CD4-positive, alpha-beta memory T cell (primary cell): ENCODE measurements at regions of chr17 and their contacts with region 1.

Region 1: GRCh38 chr17:7515911-7516610 is 31.9 kb downstream of the POLR2A start:
- DNase-seq: no peak
- H3K4me3 ChIP-seq: no peak overlapping the region
- H3K4me3 Mint-ChIP-seq: no peak overlapping the region
- H3K27ac ChIP-seq: no peak overlapping the region
- H3K27ac Mint-ChIP-seq: peak overlapping the region in 4 of 7 donors; percentile 17 to 74 (median 50)
- H3K4me1 ChIP-seq: no peaks in the 10 kb centered on the region
- H3K4me1 Mint-ChIP-seq: peaks cover 0 to 2% (median 0%) of the 10 kb centered on the region in 4 donors
- H3K27me3 ChIP-seq: no peaks in the 10 kb centered on the region
- H3K27me3 Mint-ChIP-seq: no peaks in the 10 kb centered on the region

Region 2: DNA sequence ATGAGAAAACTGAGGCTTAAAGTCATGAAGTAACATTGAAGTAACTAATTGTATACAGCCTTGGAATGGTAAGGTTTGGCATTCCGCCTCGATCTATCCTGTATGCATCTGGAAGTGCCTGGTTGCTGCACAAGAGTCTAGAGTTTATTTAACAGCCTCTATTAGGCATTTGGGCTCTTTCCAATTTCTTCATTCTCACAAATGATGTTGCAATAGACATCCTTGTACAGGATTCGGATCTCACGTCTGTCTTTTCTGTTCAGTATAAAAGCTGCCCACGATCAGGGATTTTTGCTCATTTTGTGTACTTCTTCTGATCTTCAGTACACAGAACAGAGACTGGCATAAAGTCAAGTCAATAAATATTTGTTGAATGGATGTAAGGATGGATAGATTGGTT is 1181.7 kb before region 1 on chr17:
- CTCF ChIA-PET with region 1: no interaction called
- POLR2A ChIA-PET with region 1: no interaction called
- intact Hi-C with region 1: no loop called
- DNase-seq: no peak
- H3K4me3 ChIP-seq: no peak overlapping the region
- H3K4me3 Mint-ChIP-seq: no peak overlapping the region
- H3K27ac ChIP-seq: no peak overlapping the region
- H3K27ac Mint-ChIP-seq: no peak overlapping the region
- H3K4me1 ChIP-seq: no peaks in the 10 kb centered on the region
- H3K4me1 Mint-ChIP-seq: no peaks in the 10 kb centered on the region
- H3K27me3 ChIP-seq: no peaks in the 10 kb centered on the region
- H3K27me3 Mint-ChIP-seq: peaks cover 5 to 18% of the 10 kb centered on the region in 2 donors

Region 3: DNA sequence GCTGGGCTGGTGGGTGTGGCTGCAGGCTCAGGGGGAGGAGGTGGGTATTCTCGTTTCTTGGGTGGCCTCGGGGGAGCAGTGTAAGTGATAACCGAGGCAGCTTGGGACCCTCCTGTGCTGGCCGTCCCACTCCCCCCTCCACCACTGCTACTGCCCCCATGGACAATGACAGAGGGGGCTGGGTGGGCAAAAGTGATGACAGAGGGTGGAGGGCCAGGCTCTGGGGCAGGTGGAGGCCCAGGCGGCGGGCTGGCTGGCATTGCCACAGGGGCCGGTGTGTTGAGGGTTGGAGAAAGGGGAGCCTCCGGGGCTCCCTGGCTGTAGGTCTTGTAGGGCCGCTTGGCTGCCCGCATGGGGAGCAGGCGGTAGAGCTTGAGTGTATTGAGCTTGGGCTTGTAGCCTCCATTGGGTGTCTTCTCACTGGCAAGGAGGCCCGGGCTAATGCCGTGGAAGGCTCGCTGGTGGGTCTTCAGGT is 52.7 kb before region 1 on chr17:
- CTCF ChIA-PET with region 1: no interaction called
- POLR2A ChIA-PET with region 1: no interaction called
- intact Hi-C with region 1: no loop called
- DNase-seq: no peak
- H3K4me3 ChIP-seq: no peak overlapping the region
- H3K4me3 Mint-ChIP-seq: peak overlapping the region in 1 of 8 donors; percentile 36
- H3K27ac ChIP-seq: no peak overlapping the region
- H3K27ac Mint-ChIP-seq: peak overlapping the region in 1 of 7 donors; percentile 41
- H3K4me1 ChIP-seq: peaks cover 3% of the 10 kb centered on the region
- H3K4me1 Mint-ChIP-seq: peaks cover 2 to 22% (median 5%) of the 10 kb centered on the region in 4 donors
- H3K27me3 ChIP-seq: no peaks in the 10 kb centered on the region
- H3K27me3 Mint-ChIP-seq: no peaks in the 10 kb centered on the region

Region 4: DNA sequence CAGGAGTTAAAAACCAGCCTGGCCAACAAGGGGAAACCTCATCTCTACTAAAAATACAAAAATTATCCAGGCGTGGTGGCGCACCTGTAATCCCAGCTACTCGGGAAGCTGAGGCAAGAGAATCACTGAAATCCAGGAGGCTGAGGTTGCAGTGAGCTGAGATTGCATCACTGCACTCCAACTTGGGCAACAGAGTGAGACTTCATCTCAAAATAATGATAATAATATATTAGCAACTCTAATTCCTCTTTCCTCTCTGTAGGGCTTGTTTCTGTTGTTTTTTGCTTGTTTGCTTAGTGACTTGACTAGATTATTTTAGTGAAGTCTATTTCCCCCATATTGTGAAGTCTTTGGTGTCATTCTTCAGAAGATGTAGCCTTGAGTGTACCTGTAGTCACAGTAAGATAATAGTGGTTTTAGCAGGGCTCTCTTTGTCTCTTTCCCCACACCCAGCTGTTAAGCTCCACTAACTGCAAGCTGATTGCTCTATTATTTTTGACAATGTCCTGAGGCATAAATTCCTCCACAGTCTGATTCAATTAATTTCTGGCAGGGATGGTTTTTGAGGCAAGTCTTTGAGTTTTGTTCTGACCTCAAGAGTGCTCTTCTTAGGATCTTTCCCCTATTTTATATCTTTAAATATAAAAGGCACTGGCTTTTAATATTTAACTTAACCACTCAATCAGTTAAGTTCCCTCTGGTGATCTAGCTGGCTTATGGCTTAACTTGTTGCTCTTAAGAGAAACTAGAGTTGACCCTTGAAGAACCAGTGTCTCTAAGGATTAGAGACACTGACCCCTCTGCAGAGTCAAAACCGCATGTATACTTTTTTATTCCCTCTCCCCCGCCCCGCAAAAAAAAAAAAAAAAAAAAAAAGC is 14.2 kb after region 1 on chr17:
- CTCF ChIA-PET with region 1: interaction called, 27 read pairs
- POLR2A ChIA-PET with region 1: no interaction called
- intact Hi-C with region 1: no loop called
- DNase-seq: no peak
- H3K4me3 ChIP-seq: no peak overlapping the region
- H3K4me3 Mint-ChIP-seq: no peak overlapping the region
- H3K27ac ChIP-seq: no peak overlapping the region
- H3K27ac Mint-ChIP-seq: no peak overlapping the region
- H3K4me1 ChIP-seq: no peaks in the 10 kb centered on the region
- H3K4me1 Mint-ChIP-seq: no peaks in the 10 kb centered on the region
- H3K27me3 ChIP-seq: no peaks in the 10 kb centered on the region
- H3K27me3 Mint-ChIP-seq: no peaks in the 10 kb centered on the region

Region 5: GRCh38 chr17:7548585-7549400 is 32.7 kb after region 1 on chr17 and contains the start of gene TNFSF12:
- CTCF ChIA-PET with region 1: interaction called, 27 read pairs
- POLR2A ChIA-PET with region 1: interaction called, 4 read pairs
- intact Hi-C with region 1: no loop called
- DNase-seq: peak; percentile 38 to 64 (median 42)
- H3K4me3 ChIP-seq: peak within 1 kb of the TSS; percentile 72 to 82
- H3K4me3 Mint-ChIP-seq: peak within 1 kb of the TSS; percentile 88 to 96 (median 92)
- H3K27ac ChIP-seq: peak within 1 kb of the TSS; percentile 79
- H3K27ac Mint-ChIP-seq: peak within 1 kb of the TSS; percentile 81 to 96 (median 94)
- H3K4me1 ChIP-seq: peaks cover 37% of the 10 kb centered on the region
- H3K4me1 Mint-ChIP-seq: peaks cover 30 to 52% (median 43%) of the 10 kb centered on the region in 4 donors
- H3K27me3 ChIP-seq: no peaks in the 10 kb centered on the region
- H3K27me3 Mint-ChIP-seq: no peaks in the 10 kb centered on the region
- total RNA-seq, gene TNFSF12: 45.1 to 52.2 TPM

Region 6: DNA sequence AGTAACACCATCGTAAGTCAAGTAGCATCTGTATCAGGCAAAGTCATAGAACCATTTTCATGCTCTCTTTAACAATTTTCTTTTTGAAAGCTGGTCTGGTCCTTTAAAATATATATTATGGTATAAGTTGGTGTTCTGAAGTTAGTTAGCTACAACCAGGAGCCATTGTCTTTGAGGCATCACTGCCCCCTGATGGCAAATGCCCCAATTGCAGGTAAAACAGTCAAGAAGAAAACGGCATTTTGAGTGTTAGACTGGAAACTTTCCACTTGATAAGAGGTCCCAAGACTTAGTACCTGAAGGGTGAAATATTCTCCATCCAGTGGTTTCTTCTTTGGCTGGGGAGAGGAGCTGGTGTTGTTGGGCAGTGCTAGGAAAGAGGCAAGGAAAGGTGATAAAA is 157.2 kb after region 1 on chr17:
- CTCF ChIA-PET with region 1: no interaction called
- POLR2A ChIA-PET with region 1: no interaction called
- intact Hi-C with region 1: no loop called
- DNase-seq: no peak
- H3K4me3 ChIP-seq: no peak overlapping the region
- H3K4me3 Mint-ChIP-seq: no peak overlapping the region
- H3K27ac ChIP-seq: no peak overlapping the region
- H3K27ac Mint-ChIP-seq: no peak overlapping the region
- H3K4me1 ChIP-seq: no peaks in the 10 kb centered on the region
- H3K4me1 Mint-ChIP-seq: peaks cover 5 to 7% (median 6%) of the 10 kb centered on the region in 4 donors
- H3K27me3 ChIP-seq: no peaks in the 10 kb centered on the region
- H3K27me3 Mint-ChIP-seq: no peaks in the 10 kb centered on the region